ENCODE measurements at regions of chr10 and their contacts with region 1.

Region 1: DNA sequence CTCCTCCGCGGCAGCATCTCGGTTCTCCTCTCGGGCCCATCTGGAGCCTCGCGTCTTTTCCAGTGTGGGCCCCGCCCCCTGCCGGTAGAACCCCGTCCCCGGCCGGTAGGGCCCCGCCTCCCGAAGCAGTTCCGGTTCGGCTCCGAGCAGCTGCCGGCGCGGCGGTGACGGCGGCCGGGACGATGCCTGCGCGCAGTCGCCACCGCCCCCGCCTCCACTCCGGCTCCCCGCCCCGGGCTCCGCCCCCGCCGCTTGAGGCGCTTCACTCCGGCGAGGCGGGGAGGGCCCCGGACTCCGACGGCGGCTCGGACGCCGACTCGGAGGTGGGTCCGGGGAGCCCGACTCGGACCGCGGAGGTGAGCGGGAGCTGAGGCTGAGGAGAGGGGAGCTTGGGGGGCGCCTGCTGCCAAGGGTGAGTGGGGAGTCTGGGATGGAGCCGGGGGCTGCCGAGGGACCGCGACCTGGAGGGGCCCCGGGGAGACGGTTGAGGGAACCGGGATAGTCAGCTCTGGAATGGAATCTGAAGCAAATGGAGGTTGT is at the start of gene SAMD8:
- DNase-seq: peak; percentile 99
- ATAC-seq: peak; percentile 96
- H3K4me3 ChIP-seq: peak within 1 kb of the TSS; percentile 95
- H3K27ac ChIP-seq: peak within 1 kb of the TSS; percentile 95
- H3K4me1 ChIP-seq: peaks cover 36% of the 10 kb centered on the region
- H3K27me3 ChIP-seq: no peaks in the 10 kb centered on the region
- CTCF ChIP-seq: peak; percentile 34
- total RNA-seq, gene SAMD8: 23.0 TPM

Region 2: DNA sequence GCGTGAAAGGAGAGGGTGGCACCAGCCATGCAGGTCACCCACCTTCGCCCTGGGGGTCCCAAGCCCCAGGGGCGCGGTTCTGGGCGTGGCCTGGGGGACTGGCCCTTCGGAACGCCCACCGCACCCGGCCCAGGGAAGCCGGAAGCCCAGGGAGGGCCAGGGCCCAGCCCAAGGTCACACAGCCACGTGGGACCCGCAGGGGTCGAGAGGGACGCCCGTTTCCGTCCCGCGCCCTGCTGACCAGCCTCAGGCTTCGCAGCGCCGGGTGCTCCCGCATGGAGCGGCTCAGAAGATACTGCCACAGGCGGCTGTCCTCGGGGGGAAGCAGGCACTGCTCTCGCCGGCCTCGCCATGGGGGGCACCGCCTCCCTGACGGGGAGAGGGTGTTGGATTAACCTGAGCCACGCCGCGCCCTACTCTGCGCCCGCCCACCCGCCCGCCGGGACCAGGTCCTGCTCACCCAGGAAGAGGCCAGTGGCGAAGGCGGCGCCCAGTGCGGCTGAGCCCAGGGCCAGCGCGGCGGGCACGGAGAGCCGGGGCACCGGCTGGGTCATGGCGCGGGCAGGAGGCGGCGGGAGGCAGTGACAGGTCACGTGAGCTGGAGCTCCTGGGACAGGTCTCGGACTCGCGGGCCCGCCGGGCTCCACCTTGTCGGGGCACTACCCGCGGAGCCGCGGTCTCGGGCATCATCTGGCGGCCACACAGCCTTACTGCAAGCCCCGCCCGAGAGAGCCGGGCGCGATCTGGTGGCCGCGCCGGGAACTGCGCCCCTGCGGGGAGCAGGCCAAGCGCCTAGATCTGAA is 124.1 kb after region 1 on chr10 and contains the start of gene COMTD1:
- intact Hi-C with region 1: loop called (anchors 10 kb)
- DNase-seq: peak; percentile 98
- ATAC-seq: peak; percentile 90
- H3K4me3 ChIP-seq: peak within 1 kb of the TSS; percentile 94
- H3K27ac ChIP-seq: peak within 1 kb of the TSS; percentile 87
- H3K4me1 ChIP-seq: peaks cover 9% of the 10 kb centered on the region
- H3K27me3 ChIP-seq: no peaks in the 10 kb centered on the region
- CTCF ChIP-seq: peak; percentile 100
- total RNA-seq, gene COMTD1: 21.8 TPM